Naive thymus-derived CD4-positive, alpha-beta T cell (primary cell): ENCODE measurements at regions of chr10 and their contacts with region 1.

Region 1: DNA sequence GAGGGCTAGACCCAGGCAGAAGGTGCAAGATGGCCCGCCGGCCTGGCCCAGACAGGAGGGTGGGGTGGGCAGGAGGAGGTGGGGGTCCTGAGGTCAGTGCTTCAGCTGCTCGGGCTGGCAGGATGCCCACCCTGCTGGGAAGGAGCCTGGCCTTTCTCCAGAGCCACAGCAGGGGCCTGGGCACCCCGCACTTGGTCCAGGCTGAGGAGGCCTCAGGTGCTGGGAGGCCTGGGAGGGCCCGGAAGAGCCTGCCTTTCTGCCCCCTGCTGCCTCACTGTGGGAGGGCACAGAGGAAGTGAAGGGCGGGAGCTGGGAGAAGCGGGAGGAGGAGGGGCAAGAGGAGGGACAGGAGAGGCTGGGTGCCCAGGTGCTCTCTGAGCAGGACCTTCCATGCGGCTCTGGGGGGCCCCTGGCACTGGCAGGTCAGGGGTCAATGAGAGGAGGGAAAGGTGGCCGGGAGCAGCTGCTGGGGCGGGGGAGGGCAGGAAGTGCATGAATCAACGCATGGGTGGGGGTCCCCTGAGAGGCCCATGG is 49.7 kb downstream of the PWWP2B start:
- DNase-seq: peak in 8 of 9 donors; percentile 58 to 75 (median 70)
- ATAC-seq: peak; percentile 44
- H3K4me3 ChIP-seq: peak overlapping the region; percentile 60
- H3K4me3 Mint-ChIP-seq: peak overlapping the region; percentile 50 to 89 (median 78)
- H3K27ac ChIP-seq: peak overlapping the region; percentile 98
- H3K27ac Mint-ChIP-seq: peak overlapping the region; percentile 96 to 100 (median 98)
- H3K4me1 ChIP-seq: peaks cover 21 to 50% of the 10 kb centered on the region in 2 donors
- H3K4me1 Mint-ChIP-seq: peaks cover 25 to 64% (median 42%) of the 10 kb centered on the region in 7 donors
- H3K27me3 ChIP-seq: no peaks in the 10 kb centered on the region
- H3K27me3 Mint-ChIP-seq: no peaks in the 10 kb centered on the region

Region 2: DNA sequence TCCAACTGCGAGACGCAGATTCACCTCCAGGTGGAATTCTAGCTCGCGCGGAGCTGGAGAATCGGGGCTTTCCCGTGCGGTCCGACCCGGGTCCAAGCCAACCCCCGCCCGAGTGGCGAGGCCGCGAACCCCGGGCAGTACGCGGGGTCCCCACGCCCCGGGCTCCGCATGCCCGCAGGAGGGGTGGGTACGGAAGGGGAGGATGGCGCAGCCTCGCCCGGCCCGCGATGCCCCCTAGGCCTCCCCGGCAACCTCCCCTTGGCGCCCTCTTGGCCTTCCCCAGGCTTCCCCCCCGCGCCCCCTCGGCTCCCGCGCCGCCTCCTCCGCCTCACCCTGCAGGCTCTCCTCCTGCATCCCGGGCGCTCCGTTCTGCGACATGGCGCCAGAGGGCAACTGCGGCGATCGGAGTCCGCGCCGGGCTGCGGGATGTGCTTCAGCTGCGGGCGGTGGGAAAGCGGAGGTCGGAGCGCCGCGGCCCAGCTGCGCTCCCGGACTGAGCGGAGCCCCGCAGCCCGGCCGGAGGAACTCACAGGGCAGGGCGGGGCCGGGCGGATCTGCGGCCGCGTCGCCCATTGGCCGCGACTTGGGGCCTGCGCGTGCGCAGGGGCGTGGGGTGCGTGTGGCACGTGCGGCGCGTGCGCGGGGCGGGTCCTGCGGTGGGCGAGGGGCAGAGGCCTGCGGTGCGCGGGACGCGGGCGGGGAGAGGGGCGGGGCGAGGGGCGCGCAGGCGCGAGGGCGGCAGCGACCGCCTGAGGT is 465.1 kb before region 1 on chr10 and contains the start of gene BNIP3:
- CTCF ChIA-PET with region 1: no interaction called
- POLR2A ChIA-PET with region 1: no interaction called
- intact Hi-C with region 1: loop called in 1 of 2 experiments (anchors 5 kb)
- DNase-seq: peak; percentile 92 to 99 (median 93)
- ATAC-seq: peak; percentile 96
- H3K4me3 ChIP-seq: peak within 1 kb of the TSS; percentile 79
- H3K4me3 Mint-ChIP-seq: peak within 1 kb of the TSS; percentile 81 to 93 (median 88)
- H3K27ac ChIP-seq: peak within 1 kb of the TSS; percentile 79
- H3K27ac Mint-ChIP-seq: peak within 1 kb of the TSS; percentile 66 to 89 (median 84)
- H3K4me1 ChIP-seq: peaks cover 7 to 22% of the 10 kb centered on the region in 2 donors
- H3K4me1 Mint-ChIP-seq: peaks cover 23 to 49% (median 42%) of the 10 kb centered on the region in 7 donors
- H3K27me3 ChIP-seq: no peaks in the 10 kb centered on the region
- H3K27me3 Mint-ChIP-seq: peaks cover 0 to 18% (median 0%) of the 10 kb centered on the region in 5 donors
- total RNA-seq, gene BNIP3: 17.7 to 81.7 (median 39.3) TPM

Region 3: GRCh38 chr10:132185601-132186487 is 260.9 kb before region 1 on chr10:
- CTCF ChIA-PET with region 1: no interaction called
- POLR2A ChIA-PET with region 1: no interaction called
- intact Hi-C with region 1: loop called in 1 of 2 experiments (anchors 1 kb)
- DNase-seq: peak; percentile 53 to 79 (median 66)
- ATAC-seq: peak; percentile 92
- H3K4me3 ChIP-seq: peak overlapping the region; percentile 27
- H3K4me3 Mint-ChIP-seq: peak overlapping the region; percentile 16 to 84 (median 63)
- H3K27ac ChIP-seq: peak overlapping the region; percentile 55
- H3K27ac Mint-ChIP-seq: peak overlapping the region in 3 of 9 donors; percentile 29 to 47 (median 41)
- H3K4me1 ChIP-seq: peaks cover 0 to 7% of the 10 kb centered on the region in 2 donors
- H3K4me1 Mint-ChIP-seq: peaks cover 3 to 28% (median 17%) of the 10 kb centered on the region in 7 donors
- H3K27me3 ChIP-seq: peaks cover 0 to 10% of the 10 kb centered on the region in 2 donors
- H3K27me3 Mint-ChIP-seq: peaks cover 0 to 38% (median 31%) of the 10 kb centered on the region in 5 donors

Region 4: GRCh38 chr10:132396495-132397035 is 50.2 kb before region 1 on chr10:
- CTCF ChIA-PET with region 1: interaction called, 7 read pairs
- POLR2A ChIA-PET with region 1: interaction called, 8 read pairs
- intact Hi-C with region 1: loop called (anchors 1 kb)
- DNase-seq: peak; percentile 61 to 78 (median 74)
- ATAC-seq: peak; percentile 78
- H3K4me3 ChIP-seq: no peak overlapping the region
- H3K4me3 Mint-ChIP-seq: peak overlapping the region in 1 of 10 donors; percentile 94
- H3K27ac ChIP-seq: peak overlapping the region; percentile 77
- H3K27ac Mint-ChIP-seq: no peak overlapping the region
- H3K4me1 ChIP-seq: peaks cover 9 to 10% of the 10 kb centered on the region in 2 donors
- H3K4me1 Mint-ChIP-seq: peaks cover 0 to 42% (median 25%) of the 10 kb centered on the region in 7 donors
- H3K27me3 ChIP-seq: no peaks in the 10 kb centered on the region
- H3K27me3 Mint-ChIP-seq: peaks cover 0 to 6% (median 0%) of the 10 kb centered on the region in 5 donors

Region 5: GRCh38 chr10:132434405-132435005 is 12.2 kb before region 1 on chr10:
- CTCF ChIA-PET with region 1: interaction called, 4 read pairs
- POLR2A ChIA-PET with region 1: interaction called, 7 read pairs
- intact Hi-C with region 1: loop called (anchors 1 kb)
- DNase-seq: peak in 7 of 9 donors; percentile 38 to 61 (median 50)
- ATAC-seq: peak; percentile 67
- H3K4me3 ChIP-seq: no peak overlapping the region
- H3K4me3 Mint-ChIP-seq: peak overlapping the region; percentile 5 to 79 (median 60)
- H3K27ac ChIP-seq: peak overlapping the region; percentile 10
- H3K27ac Mint-ChIP-seq: peak overlapping the region in 5 of 9 donors; percentile 57 to 79 (median 67)
- H3K4me1 ChIP-seq: peaks cover 0 to 4% of the 10 kb centered on the region in 2 donors
- H3K4me1 Mint-ChIP-seq: peaks cover 5 to 14% (median 8%) of the 10 kb centered on the region in 7 donors
- H3K27me3 ChIP-seq: no peaks in the 10 kb centered on the region
- H3K27me3 Mint-ChIP-seq: no peaks in the 10 kb centered on the region

Region 6: GRCh38 chr10:132469197-132469884 is 22.6 kb after region 1 on chr10:
- CTCF ChIA-PET with region 1: no interaction called
- POLR2A ChIA-PET with region 1: no interaction called
- intact Hi-C with region 1: no loop called
- DNase-seq: no peak
- ATAC-seq: no peak
- H3K4me3 ChIP-seq: no peak overlapping the region
- H3K4me3 Mint-ChIP-seq: no peak overlapping the region
- H3K27ac ChIP-seq: no peak overlapping the region
- H3K27ac Mint-ChIP-seq: no peak overlapping the region
- H3K4me1 ChIP-seq: no peaks in the 10 kb centered on the region
- H3K4me1 Mint-ChIP-seq: peaks cover 0 to 6% (median 0%) of the 10 kb centered on the region in 7 donors
- H3K27me3 ChIP-seq: no peaks in the 10 kb centered on the region
- H3K27me3 Mint-ChIP-seq: peaks cover 0 to 7% (median 5%) of the 10 kb centered on the region in 5 donors